ENCODE measurements at regions of chr16 and their contacts with region 1.

Region 1: DNA sequence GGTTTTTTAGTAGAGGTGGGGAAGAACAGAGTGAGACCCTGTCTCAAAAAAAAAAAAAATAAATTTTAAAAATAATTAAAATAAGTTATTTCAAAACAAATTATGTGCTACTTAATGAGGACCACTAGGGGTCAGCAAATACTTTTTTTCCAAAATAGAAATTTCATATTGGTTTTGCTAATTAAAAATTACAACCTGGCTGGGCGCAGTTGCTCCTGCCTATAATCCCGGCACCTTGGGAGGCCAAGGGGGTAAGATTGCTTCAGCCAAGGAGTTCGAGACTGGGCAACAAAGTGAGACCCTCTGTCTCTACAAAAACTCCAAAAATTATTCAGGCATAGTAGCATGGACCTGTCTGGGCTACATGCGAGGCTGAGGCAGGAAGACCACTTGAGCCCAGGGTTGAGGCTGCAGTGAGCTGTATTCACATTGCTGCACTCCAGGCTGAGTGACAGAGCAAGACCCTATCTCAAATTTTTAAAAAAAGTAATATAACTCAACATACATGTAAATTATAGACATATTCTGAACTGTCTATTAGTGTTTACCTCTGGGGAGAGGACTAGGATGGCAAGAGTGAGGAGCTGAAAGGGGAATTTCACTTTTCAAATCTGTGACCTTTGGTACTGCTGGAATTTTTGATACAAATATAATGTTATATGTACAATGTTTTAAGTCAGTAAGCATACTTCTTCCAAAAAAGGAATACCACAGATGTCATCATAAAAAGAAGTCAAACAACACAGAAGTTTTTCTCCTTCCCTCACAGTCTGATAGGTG is 8.1 kb downstream of the MEIOB start:
- DNase-seq: peak in 1 of 2 experiments; percentile 44
- ATAC-seq: peak; percentile 66 to 74; a peak in 5 of 6 replicates
- H3K4me3 ChIP-seq: no peak overlapping the region
- H3K27ac ChIP-seq: peak overlapping the region; percentile 37 to 67; a peak in 5 of 6 replicates
- H3K4me1 ChIP-seq: peaks cover 26% of the 10 kb centered on the region
- CTCF ChIP-seq: peak; percentile 84
- EP300 ChIP-seq: no peak
- POLR2A ChIP-seq: no peak
- RAD21 ChIP-seq: peak; percentile 75 to 90

Region 2: DNA sequence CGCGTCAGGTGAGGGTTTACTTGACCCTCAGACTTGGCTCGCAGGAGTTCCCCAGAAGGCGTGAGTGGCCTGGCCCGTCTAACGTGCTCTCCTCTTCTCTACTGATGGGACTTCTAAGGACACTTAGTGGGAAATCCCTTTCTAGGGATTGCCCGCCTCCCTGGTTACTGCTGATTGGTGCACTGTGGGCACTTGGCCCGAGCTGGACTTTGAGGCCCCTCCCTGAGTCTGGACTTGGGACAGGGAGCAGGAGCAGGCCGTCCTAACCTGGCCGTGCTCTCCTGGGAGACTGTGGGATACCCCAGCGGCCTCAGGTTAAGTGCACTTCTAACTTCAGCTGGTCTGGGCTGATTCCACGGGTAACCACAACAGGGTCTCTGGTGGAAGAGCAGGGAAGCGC is 266.7 kb before region 1 on chr16:
- CTCF ChIA-PET with region 1: no interaction called
- POLR2A ChIA-PET with region 1: no interaction called
- DNase-seq: no peak
- ATAC-seq: peak; percentile 35 to 69; a peak in 4 of 6 replicates
- H3K4me3 ChIP-seq: no peak overlapping the region
- H3K27ac ChIP-seq: no peak overlapping the region
- H3K4me1 ChIP-seq: no peaks in the 10 kb centered on the region
- CTCF ChIP-seq: no peak
- EP300 ChIP-seq: no peak
- POLR2A ChIP-seq: no peak
- RAD21 ChIP-seq: no peak

Region 3: DNA sequence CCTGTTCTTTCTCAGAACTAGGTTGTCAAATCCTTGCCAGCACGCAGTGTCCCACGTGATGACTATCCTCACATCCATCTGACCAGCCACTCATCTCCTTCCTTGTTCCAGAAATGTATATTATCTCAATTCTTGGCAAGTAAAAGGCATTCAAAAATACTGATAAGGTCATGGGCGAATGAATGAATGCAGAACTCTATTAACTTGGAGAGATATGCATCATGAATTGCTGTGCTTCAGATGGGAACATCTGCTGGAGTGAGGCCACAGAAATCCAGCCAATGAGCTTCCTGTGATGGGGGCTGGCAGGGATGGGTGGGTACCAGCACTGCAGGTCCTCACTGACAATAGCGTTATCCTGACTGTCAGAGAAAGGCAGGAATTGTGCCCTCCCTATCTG is 17.9 kb before region 1 on chr16:
- CTCF ChIA-PET with region 1: interaction called, 12 read pairs
- POLR2A ChIA-PET with region 1: no interaction called
- DNase-seq: no peak
- ATAC-seq: no peak
- H3K4me3 ChIP-seq: no peak overlapping the region
- H3K27ac ChIP-seq: no peak overlapping the region
- H3K4me1 ChIP-seq: no peaks in the 10 kb centered on the region
- CTCF ChIP-seq: no peak
- EP300 ChIP-seq: no peak
- POLR2A ChIP-seq: no peak
- RAD21 ChIP-seq: no peak

Region 4: DNA sequence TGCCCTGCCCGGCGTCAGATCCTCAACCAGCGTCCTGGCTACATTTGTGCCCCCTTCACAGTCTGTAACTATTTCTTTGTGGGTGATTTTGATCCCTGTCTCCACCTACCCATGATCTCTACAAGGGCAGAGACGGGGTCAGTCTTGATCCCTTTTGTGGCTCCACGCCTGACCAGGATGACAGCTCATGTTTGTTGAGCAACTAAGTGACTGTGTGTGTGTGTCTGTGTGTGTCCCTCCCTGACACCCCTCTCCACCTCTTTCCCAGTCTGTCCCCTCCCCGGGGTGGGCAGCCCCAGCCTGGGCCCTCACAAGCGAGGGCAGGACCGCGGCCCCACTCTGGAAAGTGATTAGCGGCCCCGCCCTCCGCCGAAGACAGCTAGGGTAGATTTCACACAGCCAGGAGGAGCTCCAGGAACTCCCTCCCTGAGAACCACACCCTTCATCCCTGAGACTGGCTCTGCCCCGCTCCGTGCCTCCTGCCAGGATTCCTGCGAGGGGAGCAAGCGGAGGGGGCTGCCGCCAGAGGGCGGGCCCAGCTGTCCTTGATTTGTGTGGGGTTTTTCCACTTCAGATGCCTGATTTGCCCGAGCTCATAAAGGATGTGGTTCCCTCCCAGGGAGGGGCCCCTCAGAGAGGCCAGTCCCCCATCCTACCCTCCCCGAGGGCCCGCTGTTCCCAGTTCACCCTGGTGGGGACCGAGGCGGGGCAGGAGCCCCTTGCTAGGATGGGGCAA is 59.6 kb after region 1 on chr16:
- CTCF ChIA-PET with region 1: interaction called, 396 read pairs
- POLR2A ChIA-PET with region 1: no interaction called
- DNase-seq: peak; percentile 72 to 88
- ATAC-seq: peak; percentile 75 to 90
- H3K4me3 ChIP-seq: no peak overlapping the region
- H3K27ac ChIP-seq: peak overlapping the region; percentile 76 to 88
- H3K4me1 ChIP-seq: peaks cover 48% of the 10 kb centered on the region
- CTCF ChIP-seq: peak; percentile 45
- EP300 ChIP-seq: no peak
- POLR2A ChIP-seq: no peak
- RAD21 ChIP-seq: peak; percentile 14 to 26; a peak in 1 of 5 replicates

Region 5: DNA sequence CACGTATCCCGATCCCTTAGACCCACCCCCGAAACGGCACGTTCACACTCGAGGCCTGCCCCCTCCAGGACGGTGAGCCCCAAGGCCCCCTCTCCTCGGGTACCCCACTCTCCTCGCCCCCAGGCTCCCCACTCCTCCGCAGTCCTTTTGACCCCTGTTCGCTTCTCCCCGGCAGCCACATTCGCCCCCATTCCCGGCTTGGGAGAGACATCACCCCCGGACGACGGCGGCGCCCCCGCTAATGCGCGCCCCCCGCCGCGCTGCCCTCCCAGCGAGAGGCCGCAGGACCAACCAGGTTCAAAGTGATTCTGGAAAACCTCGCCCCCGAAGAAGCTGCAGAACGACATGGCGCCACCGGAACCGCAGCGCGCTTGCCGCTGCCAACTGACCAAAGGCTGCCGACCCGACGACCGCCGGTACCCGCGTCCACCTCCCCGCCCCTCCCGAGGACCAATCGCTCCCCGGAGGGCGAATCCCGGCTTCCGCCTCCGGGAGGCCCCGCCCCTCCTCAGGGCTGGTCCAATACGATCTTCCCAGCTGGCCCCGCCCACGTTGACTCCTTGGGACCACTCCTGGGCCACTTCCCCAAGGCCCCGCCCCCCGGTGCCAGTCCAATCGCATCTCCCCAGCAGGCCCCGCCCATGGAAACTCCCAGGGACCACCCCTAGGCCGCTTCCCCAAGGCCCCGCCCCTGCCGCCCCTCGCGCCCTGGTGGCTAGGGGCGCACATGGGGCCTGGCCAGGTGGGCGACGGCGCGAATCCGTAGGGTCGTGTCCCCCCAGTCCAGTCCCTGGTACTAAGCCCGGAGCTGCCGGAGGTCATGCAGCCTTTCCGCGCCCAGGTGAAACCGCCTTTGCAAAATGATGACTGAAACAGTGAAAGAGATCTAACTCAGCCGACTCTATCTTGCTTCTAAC is 79.2 kb after region 1 on chr16 and contains the start of gene MSRB1:
- CTCF ChIA-PET with region 1: interaction called, 24 read pairs
- POLR2A ChIA-PET with region 1: no interaction called
- DNase-seq: peak; percentile 97 to 98
- ATAC-seq: peak; percentile 84 to 93
- H3K4me3 ChIP-seq: peak within 1 kb of the TSS; percentile 84
- H3K27ac ChIP-seq: peak within 1 kb of the TSS; percentile 79 to 92
- H3K4me1 ChIP-seq: peaks cover 19% of the 10 kb centered on the region
- CTCF ChIP-seq: no peak
- EP300 ChIP-seq: no peak
- POLR2A ChIP-seq: peak; percentile 90
- RAD21 ChIP-seq: no peak
- polyA plus RNA-seq, gene MSRB1: 27.7 and 34.4 TPM in 2 replicates

Measured in A549 (cell line).